Right ventricle myocardium inferior (tissue), 1 donor: ENCODE measurements at regions of chr6 and their contacts with region 1.

Region 1: GRCh38 chr6:144149891-144150709 is at the start of gene STX11:
- DNase-seq: peak; percentile 90
- ATAC-seq: peak; percentile 97
- total RNA-seq, gene STX11: 11.1 TPM

Region 2: DNA sequence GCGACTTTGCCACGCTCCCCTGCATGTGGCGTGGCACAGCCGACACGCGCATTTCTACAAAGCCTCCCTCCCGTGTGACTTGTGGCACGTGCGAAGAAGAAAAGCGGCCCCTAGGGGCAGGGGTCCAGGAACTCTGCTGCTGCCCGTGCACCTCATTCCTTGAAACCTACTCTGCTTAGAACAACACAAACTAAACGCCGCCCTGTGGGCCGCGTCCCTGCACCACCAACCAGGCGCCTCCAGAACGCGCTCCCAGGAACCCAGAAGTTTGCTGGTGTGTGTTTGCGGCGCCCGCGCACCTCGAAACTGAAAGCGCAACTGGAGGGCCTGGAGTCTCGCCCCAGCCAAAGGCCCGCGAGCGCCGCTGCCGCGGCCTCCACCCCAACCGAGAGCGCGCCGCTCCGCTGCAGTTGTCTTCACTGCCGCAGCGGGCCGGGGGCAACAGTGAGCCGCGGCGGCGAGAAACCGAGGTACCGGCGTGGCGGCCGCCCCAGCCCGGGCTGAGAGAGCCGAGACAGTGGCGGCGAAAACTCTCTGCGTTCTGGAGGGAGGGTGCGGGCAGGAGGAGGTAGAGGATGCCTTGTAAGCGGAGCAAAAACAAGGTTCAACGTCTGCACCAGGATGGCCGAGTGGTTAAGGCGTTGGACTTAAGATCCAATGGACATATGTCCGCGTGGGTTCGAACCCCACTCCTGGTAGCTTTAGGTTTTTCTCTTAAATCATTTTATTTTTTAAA is 66.0 kb after region 1 on chr6:
- intact Hi-C with region 1: loop called (anchors 1 kb)
- DNase-seq: peak; percentile 96
- ATAC-seq: peak; percentile 94